ENCODE measurements at regions of chr2 and their contacts with region 1.

Region 1: DNA sequence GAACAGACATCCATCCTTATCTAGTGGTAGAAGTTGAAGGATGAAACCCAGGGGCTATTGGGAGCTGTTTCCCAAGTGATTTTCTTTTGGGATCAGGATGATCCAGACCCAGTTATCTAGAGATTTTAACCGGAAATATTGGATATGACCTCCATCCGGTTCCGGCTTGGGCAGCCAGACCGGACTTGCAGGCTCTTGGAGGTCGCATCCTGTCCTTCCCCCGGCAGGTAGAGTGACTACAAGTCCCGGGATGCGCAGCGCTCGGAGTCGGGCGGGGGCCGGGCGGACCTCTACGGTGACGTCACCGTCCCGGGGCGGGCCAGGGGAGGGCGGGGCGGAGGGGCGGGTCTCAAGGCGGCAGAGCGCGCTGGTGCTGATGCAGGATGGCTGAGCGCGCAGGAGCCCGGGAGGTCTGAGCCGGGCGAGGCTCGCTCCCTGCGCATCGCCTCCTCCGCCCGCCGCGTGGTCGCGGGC is at the start of gene KIF5C:
- DNase-seq: peak; percentile 92 to 95
- H3K4me3 ChIP-seq: peak within 1 kb of the TSS; percentile 33
- H3K4me3 Mint-ChIP-seq: peak within 1 kb of the TSS; percentile 74
- H3K27ac Mint-ChIP-seq: no peak within 1 kb of the TSS
- H3K4me1 ChIP-seq: 0 out of 2 replicates have a peak, but pooled peaks cover 6% of the 10 kb centered on the region
- H3K4me1 Mint-ChIP-seq: no peaks in the 10 kb centered on the region
- H3K27me3 ChIP-seq: peaks cover 4% of the 10 kb centered on the region
- H3K27me3 Mint-ChIP-seq: peaks cover 18% of the 10 kb centered on the region
- CTCF ChIP-seq: no peak
- total RNA-seq, gene KIF5C: 1.1 and 1.5 TPM in 2 replicates

Region 2: DNA sequence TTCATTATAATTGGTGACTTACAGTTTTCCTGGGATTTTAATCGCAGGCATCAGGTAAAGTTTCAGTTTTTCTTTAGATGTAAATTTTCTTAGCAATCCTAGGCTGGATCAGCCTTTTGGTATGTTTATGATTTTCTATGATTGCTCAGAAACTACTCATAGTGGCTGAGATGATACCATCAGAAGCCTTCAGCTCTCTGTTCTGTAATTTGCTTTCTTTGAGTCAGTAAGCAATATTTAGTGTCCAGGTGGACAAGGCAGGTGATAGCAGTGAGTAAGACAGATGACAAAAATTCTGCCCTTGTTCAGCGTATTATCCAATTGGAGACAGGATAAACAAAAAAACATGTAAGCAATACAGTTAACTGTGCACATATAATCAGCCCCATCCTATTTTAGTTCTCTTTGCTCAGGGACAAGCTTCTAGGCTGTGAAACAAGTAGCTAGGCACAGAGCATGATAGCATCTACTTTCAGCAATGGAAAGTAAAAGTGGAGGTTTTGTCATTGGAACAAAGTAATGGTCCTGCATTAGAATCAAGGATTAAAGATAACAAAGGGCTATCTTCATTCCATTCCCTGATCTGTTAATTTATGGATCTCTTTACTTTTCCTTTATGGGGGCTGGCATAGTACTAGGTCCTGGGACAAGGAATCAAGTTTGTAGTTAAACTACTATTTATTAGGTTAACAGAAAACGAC is 129.6 kb before region 1 on chr2:
- CTCF ChIA-PET with region 1: no interaction called
- POLR2A ChIA-PET with region 1: no interaction called
- intact Hi-C with region 1: loop called (anchors 1 kb)
- DNase-seq: no peak
- H3K4me3 ChIP-seq: no peak overlapping the region
- H3K4me3 Mint-ChIP-seq: no peak overlapping the region
- H3K27ac Mint-ChIP-seq: no peak overlapping the region
- H3K4me1 ChIP-seq: peaks cover 43% of the 10 kb centered on the region
- H3K4me1 Mint-ChIP-seq: peaks cover 42% of the 10 kb centered on the region
- H3K27me3 ChIP-seq: no peaks in the 10 kb centered on the region
- H3K27me3 Mint-ChIP-seq: no peaks in the 10 kb centered on the region
- CTCF ChIP-seq: no peak

Region 3: DNA sequence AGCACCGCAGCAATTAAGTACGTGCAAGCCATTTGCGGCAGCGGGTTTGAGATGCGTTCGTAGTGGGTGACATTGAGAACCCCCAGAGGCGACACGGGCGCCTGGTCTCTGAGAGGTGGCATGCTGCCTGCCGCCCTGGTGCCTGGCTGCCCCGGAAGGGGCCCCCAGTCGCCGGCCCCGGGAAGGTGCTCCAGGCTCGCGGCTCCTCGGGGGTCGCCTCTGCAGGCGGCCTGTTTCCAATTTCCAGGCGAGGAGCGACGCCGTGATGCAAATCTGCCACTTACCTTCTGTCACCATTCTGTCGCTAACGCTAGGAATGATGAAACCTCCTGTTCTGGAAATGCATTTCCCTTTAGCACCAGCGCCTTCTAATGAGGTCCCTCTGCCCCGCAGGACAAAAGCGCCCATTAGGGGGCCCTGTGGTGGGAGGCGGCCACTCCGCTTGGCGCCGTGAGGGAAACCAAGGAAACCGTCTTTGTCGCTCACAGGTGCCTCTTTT is 13.1 kb after region 1 on chr2:
- CTCF ChIA-PET with region 1: no interaction called
- POLR2A ChIA-PET with region 1: no interaction called
- intact Hi-C with region 1: no loop called
- DNase-seq: no peak
- H3K4me3 ChIP-seq: no peak overlapping the region
- H3K4me3 Mint-ChIP-seq: no peak overlapping the region
- H3K27ac Mint-ChIP-seq: no peak overlapping the region
- H3K4me1 ChIP-seq: no peaks in the 10 kb centered on the region
- H3K4me1 Mint-ChIP-seq: no peaks in the 10 kb centered on the region
- H3K27me3 ChIP-seq: no peaks in the 10 kb centered on the region
- H3K27me3 Mint-ChIP-seq: peaks cover 8% of the 10 kb centered on the region
- CTCF ChIP-seq: no peak

Measured in Caco-2 (cell line).